ENCODE measurements at regions of chr20 and their contacts with region 1.

Region 1: DNA sequence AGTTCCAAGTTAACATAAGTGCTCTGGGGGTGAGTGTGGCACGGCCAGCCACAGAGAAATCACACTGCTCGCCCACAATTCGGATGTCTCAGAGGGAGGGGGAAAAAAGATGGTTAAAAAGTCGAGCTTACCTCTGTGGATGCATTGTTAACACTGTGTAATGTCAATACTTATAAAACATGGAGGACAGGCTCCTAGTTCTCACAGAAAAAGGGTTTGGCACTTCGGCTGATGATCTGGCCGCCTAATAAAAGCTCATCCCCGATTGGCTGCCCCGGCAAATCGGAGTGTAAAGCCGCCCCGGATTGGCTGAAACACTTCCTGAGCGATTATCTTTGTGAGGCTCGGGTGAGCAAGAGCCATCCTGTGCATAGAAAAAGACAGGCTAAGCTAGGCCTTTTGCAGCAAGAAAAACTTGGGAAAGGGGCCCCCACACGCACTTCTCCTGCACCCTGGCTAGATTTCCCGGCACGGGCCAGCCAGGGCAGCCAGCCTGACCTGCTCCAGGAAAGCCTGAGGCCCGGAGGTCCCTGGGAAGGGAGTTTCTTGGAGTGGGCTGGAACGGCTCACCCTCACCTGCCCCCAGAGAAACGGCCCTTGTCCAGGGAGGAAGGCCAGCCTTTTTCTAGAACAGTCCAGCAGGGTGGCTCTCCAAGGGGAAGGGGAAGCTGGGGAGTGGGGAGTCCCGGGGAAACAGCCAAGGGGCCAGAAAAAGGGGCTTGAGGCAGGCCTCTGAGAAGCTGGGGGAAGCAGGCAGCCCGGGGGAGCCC is at the start of gene ZMYND8:
- DNase-seq: peak; percentile 96
- ATAC-seq: peak; percentile 81
- H3K4me3 Mint-ChIP-seq: no peak within 1 kb of the TSS
- H3K27ac Mint-ChIP-seq: no peak within 1 kb of the TSS
- H3K4me1 Mint-ChIP-seq: peaks cover 55% of the 10 kb centered on the region
- H3K27me3 Mint-ChIP-seq: no peaks in the 10 kb centered on the region
- CTCF ChIP-seq: no peak
- total RNA-seq, gene ZMYND8: 42.6 and 44.7 TPM in 2 replicates

Region 2: DNA sequence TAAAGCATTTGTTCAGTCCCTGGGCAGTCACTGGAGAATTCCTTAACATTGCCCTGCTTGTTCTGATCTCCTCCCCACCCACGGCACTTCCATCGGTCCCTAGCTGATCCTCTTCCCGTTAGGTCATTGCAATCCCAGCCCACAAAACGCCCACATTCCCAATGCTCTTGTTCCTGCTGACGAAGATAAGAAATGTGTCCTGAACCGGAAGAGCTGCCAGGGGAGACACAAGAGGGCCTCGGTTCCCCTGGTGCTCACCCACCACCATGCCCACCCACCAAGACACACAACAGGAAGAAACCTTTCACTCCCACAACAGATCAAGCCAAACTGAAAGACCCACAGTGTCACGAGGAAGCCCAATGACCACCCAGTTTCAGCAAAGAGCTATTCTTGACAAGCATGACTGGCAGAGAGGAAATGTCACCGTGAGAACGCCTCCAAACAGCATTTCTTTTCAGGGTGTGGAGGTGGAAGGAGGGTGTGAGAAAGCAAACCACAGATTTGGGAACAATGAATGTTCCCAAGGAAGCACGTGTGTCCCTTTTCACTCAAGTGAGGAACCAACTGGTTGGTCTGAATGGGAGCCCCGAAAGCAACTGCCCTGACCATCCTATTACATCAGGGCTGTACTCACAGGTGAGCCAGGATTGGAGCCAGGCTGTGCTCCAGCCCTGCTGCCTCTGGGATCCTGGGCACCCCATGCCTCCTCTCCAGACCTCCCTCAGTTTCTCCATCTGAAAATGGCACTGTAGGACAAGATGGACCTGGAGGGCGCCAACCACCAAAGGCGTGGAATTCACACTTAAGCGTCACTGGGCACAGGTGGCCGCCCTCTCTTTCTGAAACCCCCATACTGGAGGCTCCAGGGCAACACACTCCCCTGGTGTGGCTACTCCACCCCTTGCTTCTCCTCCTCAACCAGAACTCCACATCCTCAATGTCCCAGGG is 97.7 kb before region 1 on chr20:
- CTCF ChIA-PET with region 1: interaction called, 4 read pairs
- POLR2A ChIA-PET with region 1: interaction called, 15 read pairs
- intact Hi-C with region 1: no loop called
- DNase-seq: peak; percentile 29
- ATAC-seq: peak; percentile 38
- H3K4me3 Mint-ChIP-seq: peak overlapping the region; percentile 56
- H3K27ac Mint-ChIP-seq: peak overlapping the region; percentile 90
- H3K4me1 Mint-ChIP-seq: peaks cover 68% of the 10 kb centered on the region
- H3K27me3 Mint-ChIP-seq: no peaks in the 10 kb centered on the region
- CTCF ChIP-seq: no peak

Region 3: DNA sequence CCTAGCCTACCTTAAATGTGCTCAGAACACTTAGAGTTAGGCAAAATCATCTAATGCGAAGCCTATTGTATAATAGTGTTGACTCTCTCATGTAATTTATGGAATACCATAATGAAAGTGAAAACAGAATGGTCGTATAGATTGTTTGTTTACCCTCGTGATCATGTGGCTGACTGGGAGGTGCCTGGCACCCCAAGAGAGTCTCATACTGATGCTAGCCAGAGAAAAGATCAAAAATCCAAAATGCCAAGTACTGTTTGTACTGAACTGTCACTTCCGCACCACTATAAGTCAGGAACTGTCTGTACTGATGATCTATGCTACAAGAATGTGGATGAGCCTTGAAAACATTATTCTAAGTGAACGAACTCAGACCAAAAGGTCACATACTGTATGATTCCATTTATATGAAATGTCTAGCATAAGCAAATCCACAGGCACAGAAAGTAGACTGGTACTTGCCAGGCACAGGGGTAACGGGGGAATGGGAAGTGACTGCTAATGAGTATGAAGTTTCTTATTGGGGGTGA is 22.6 kb before region 1 on chr20:
- CTCF ChIA-PET with region 1: no interaction called
- POLR2A ChIA-PET with region 1: interaction called, 7 read pairs
- intact Hi-C with region 1: loop called (anchors 2 kb)
- DNase-seq: no peak
- ATAC-seq: no peak
- H3K4me3 Mint-ChIP-seq: peak overlapping the region; percentile 40
- H3K27ac Mint-ChIP-seq: peak overlapping the region; percentile 64
- H3K4me1 Mint-ChIP-seq: peaks cover 57% of the 10 kb centered on the region
- H3K27me3 Mint-ChIP-seq: no peaks in the 10 kb centered on the region
- CTCF ChIP-seq: no peak

Region 4: GRCh38 chr20:47418061-47418912 is 61.6 kb after region 1 on chr20:
- CTCF ChIA-PET with region 1: no interaction called
- POLR2A ChIA-PET with region 1: interaction called, 37 read pairs
- intact Hi-C with region 1: loop called (anchors 2 kb)
- DNase-seq: no peak
- ATAC-seq: no peak
- H3K4me3 Mint-ChIP-seq: no peak overlapping the region
- H3K27ac Mint-ChIP-seq: peak overlapping the region; percentile 100
- H3K4me1 Mint-ChIP-seq: peaks cover 73% of the 10 kb centered on the region
- H3K27me3 Mint-ChIP-seq: no peaks in the 10 kb centered on the region
- CTCF ChIP-seq: no peak

Region 5: GRCh38 chr20:47432211-47433210 is 75.8 kb after region 1 on chr20:
- CTCF ChIA-PET with region 1: no interaction called
- POLR2A ChIA-PET with region 1: no interaction called
- intact Hi-C with region 1: no loop called
- DNase-seq: no peak
- ATAC-seq: no peak
- H3K4me3 Mint-ChIP-seq: no peak overlapping the region
- H3K27ac Mint-ChIP-seq: peak overlapping the region; percentile 38
- H3K4me1 Mint-ChIP-seq: peaks cover 50% of the 10 kb centered on the region
- H3K27me3 Mint-ChIP-seq: no peaks in the 10 kb centered on the region
- CTCF ChIP-seq: no peak

Region 6: DNA sequence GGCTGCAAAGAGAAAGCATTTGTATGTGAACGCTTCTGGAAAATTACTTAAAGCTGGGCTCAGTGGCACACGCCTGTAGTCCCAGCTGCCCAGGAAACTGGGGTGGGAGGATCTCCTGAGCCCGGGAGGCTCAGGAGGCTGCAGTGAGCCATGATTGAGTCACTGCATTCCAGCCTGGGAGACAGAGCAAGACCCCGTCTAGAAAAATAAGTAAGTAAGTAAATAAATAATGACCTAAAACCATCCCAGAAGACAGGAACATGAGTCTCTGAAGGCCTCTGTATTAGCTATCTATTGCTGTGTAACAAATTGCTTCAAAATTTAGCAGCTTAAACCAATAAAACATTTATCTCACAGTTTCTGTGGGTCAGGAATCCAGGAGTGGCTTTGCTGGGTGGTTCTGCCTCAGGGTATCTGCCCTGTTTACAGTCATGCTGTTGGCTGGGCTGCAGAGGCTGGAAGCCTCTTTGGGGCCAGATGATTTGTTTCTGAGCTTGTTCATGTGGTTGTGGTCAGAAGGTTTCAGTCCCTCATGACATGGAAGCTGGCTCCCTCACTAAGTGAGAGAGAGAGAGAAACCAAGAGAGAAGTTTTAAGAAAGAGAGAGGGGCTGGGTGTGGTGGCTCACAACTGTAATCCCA is 96.6 kb after region 1 on chr20:
- CTCF ChIA-PET with region 1: no interaction called
- POLR2A ChIA-PET with region 1: interaction called, 16 read pairs
- intact Hi-C with region 1: no loop called
- DNase-seq: no peak
- ATAC-seq: peak; percentile 78
- H3K4me3 Mint-ChIP-seq: peak overlapping the region; percentile 49
- H3K27ac Mint-ChIP-seq: peak overlapping the region; percentile 80
- H3K4me1 Mint-ChIP-seq: peaks cover 55% of the 10 kb centered on the region
- H3K27me3 Mint-ChIP-seq: no peaks in the 10 kb centered on the region
- CTCF ChIP-seq: no peak

Measured in activated B cell treated with CpG ODN at 0.5 μM for 24 hours (primary cell).